ENCODE measurements at regions of chr3 and their contacts with region 1.

Region 1: DNA sequence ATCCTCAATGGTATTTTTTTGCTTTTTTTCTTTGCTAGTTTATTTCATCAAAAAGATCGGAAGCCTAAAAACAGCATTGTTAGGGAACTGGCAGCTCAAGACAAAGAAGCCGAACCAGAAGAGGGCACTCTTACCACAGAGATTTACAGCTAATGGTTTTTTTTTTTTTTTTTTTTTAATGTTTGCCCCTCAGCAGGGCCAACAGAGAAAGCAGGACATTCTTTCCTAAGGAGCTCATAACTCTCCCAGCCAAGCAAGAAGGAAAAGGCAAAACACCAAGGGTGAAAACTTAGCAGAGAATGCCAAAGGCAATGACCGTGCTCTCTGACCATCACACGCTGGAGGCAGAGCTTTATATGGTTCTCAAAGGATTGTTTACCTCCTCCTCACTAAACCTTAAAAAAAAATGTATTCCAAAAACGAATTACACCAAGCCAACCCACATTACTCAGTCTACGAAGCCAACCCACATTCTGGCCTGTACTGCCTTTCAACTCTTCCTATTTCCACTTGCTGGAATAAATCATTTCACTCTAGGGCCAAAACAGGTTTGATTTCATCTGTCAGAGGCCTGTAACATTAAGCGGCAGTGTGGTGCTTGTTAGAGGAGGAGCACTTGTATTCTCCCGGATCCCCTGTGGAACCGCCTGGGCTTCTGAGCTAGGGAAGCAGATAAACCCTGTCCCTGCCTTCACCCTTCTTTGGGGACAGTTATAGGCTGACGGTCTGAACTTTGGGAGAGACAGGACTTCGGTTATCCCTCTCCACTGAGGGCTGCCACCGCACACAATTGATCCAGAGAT is 35.6 kb upstream of the GYG1 start:
- DNase-seq: peak; percentile 48
- H3K4me3 ChIP-seq: no peak overlapping the region
- H3K27ac ChIP-seq: no peak overlapping the region
- H3K4me1 ChIP-seq: no peaks in the 10 kb centered on the region
- H3K27me3 ChIP-seq: no peaks in the 10 kb centered on the region
- CTCF ChIP-seq: peak; percentile 52 to 64

Region 2: DNA sequence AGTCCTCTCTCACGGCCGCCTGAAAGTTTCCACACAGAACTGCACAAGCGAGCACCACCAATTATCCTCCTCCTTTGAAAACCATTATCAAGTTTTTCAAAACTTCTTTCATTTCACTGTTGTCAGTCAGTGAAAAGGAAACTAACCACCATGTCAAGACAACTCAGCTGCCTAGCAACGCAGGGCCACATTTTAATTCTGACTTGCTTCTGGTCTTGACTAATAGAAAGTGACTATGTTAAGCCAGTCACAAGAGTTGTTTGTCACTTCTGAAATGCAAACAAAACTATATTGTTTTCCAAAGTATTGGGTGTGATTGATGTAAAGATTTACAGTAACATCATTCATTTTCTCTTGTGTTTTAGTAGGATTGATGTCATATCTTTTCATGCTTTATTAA is 870.8 kb before region 1 on chr3:
- CTCF ChIA-PET with region 1: no interaction called
- dilution Hi-C with region 1: no loop called
- in situ Hi-C with region 1: no loop called
- intact Hi-C with region 1: loop called (anchors 10 kb)
- DNase-seq: no peak
- H3K4me3 ChIP-seq: no peak overlapping the region
- H3K27ac ChIP-seq: no peak overlapping the region
- H3K4me1 ChIP-seq: no peaks in the 10 kb centered on the region
- H3K27me3 ChIP-seq: no peaks in the 10 kb centered on the region
- CTCF ChIP-seq: no peak

Region 3: DNA sequence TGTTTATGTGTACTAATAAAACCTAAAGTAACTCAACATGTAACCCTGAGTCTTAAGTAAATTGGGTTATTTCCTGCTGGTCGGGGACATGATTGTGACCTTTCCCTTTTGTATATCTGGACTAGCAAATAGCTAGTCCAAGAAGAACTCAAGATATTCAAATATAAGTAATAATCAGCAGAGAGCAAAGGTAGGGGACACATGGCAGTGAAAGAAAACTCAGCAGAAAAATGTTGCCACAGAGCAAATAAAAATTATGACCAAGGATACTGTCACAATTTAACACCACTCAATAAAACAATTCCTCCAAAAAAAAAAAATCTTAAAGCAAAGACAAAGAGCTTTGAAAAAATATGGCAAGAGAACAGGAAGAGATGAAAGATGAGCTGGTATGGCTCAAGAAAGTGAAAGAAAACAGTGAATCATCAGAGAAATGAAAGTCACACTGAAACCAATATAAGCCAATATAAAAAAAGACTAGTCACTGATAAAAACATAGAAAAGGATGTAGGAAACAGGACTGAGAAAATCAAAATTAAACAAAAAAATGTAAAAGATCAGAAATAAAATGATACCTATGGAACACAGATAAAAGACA is 87.1 kb after region 1 on chr3:
- CTCF ChIA-PET with region 1: interaction called, 18 read pairs
- dilution Hi-C with region 1: no loop called
- in situ Hi-C with region 1: no loop called
- intact Hi-C with region 1: no loop called
- DNase-seq: peak; percentile 69
- H3K4me3 ChIP-seq: no peak overlapping the region
- H3K27ac ChIP-seq: peak overlapping the region; percentile 55
- H3K4me1 ChIP-seq: no peaks in the 10 kb centered on the region
- H3K27me3 ChIP-seq: no peaks in the 10 kb centered on the region
- CTCF ChIP-seq: no peak

Region 4: DNA sequence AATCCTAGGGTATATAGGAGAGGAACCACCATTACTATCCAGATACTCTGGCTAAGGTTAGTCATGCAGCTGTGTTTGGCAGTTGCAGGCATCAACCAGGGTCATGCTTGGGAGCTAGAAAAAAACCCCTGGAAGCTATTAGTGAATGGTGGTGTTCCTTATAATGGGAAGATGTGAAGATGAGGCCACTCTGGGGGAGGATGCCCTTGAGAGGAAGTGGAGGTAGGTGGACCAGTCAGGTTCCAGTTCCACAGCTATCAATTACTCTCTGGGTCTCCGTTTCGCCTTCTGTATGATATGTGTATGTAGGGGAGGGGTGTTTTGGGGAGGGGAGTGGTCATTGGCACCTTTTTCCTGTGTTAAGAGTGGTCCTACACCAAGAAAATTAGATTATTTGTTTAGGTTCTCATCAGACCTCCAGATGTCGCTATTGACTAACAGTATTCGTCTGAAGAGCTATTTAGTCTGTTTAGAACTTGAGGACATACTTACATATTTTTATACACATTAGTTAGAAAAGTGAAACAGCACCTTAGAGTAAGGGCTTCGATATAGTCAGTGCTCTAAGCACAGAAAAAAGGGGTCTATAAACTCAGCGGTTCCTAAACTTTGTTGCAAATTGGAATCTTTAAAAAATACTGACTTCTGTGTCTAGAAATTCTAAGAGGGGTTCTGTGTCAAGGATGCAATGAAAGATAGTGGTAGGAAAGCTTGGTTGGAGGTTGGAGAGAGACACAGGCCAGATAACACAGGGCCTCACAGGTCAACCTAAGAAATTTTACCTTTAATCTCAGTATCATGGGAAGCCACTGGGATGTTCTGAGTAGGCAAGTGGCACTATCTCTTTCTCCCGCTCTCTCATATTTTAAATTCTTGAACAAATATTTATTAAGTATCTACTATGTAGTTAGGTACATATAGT is 164.6 kb after region 1 on chr3:
- CTCF ChIA-PET with region 1: no interaction called
- dilution Hi-C with region 1: no loop called
- in situ Hi-C with region 1: loop called (anchors 10 kb)
- intact Hi-C with region 1: loop called (anchors 1 kb)
- DNase-seq: peak; percentile 35
- H3K4me3 ChIP-seq: no peak overlapping the region
- H3K27ac ChIP-seq: no peak overlapping the region
- H3K4me1 ChIP-seq: no peaks in the 10 kb centered on the region
- H3K27me3 ChIP-seq: no peaks in the 10 kb centered on the region
- CTCF ChIP-seq: peak; percentile 51 to 57

Region 5: DNA sequence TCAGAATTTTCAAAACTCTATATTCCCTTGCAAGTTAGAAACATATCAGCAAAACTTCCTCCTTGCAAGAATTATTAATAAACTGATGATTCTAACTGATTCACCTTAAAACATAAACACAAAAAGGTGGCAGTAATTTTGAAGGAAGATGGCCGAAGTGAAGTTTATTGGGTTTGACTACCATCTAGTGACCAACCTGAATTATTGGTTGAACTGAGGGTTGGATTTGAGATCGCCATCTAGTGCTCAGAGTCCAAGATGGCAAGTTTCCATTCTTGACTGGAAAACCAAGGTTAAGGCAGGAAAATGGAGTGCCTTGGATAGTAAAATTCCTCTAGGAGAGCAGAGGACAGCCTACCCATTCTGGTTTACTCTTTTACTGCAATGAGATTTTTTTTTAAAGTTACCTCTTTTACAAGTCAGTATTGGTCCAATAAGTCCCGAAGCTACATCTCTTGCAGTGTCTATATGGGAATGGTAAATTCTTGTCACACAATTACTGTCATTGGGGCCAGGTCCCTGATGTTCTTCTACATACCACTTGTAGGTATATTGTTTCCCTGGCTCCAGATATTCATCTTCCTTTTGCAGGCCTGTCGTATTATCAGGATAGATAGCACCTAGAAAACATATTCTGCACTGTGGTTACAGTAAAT is 317.5 kb after region 1 on chr3:
- CTCF ChIA-PET with region 1: interaction called, 5 read pairs
- dilution Hi-C with region 1: no loop called
- in situ Hi-C with region 1: loop called in 1 of 2 experiments (anchors 10 kb)
- intact Hi-C with region 1: loop called (anchors 1 kb)
- DNase-seq: peak; percentile 69
- H3K4me3 ChIP-seq: no peak overlapping the region
- H3K27ac ChIP-seq: no peak overlapping the region
- H3K4me1 ChIP-seq: peaks cover 9% of the 10 kb centered on the region
- H3K27me3 ChIP-seq: no peaks in the 10 kb centered on the region
- CTCF ChIP-seq: peak; percentile 96

Region 6: DNA sequence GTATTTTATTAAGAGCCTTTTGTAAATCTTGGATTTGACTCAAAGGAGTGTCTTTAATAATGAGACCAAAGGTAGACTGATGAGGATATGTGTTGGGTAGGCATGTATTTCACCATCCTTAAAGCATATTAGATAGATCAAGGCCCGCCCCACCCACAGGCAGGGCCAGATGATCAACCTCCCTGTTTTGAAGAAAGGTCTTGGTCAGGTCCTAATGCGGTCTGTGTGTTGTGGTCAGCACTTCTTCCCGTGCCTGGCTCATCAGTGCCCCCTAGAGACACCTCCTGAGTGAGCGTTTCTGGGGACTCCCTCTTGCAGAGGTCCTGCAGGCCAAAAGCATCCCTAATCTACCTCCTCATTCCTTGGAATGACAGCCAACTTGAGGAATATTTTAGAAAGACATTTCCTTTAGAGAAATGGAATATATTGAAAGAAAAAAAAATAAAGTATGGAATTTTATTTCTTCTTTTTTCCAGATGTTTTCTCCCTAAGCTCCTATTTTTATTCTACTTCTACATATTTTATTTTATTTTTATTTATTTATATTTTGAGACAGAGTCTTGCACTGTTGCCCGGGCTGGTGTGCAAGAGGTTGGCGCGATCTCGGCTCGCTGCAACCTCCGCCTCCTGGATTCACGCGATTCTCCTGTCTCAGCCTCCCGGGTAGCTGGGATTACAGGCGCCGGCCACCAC is 524.7 kb after region 1 on chr3:
- CTCF ChIA-PET with region 1: no interaction called
- dilution Hi-C with region 1: no loop called
- in situ Hi-C with region 1: loop called (anchors 25 kb)
- intact Hi-C with region 1: loop called (anchors 5 kb)
- DNase-seq: peak; percentile 73
- H3K4me3 ChIP-seq: no peak overlapping the region
- H3K27ac ChIP-seq: no peak overlapping the region
- H3K4me1 ChIP-seq: peaks cover 3% of the 10 kb centered on the region
- H3K27me3 ChIP-seq: no peaks in the 10 kb centered on the region
- CTCF ChIP-seq: peak; percentile 94 to 99